Dendritic cell treated with granulocyte-macrophage colony-stimulating factor and Interleukin-4, amounts not matched to agents 40 ng/mL and 50 ng/mL, for 4 days (primary cell): ENCODE measurements at regions of chr4 and their contacts with region 1.

Region 1: GRCh38 chr4:81197864-81198524 is 17.0 kb downstream of the PRKG2 start:
- H3K4me3 Mint-ChIP-seq: no peak overlapping the region
- H3K27ac Mint-ChIP-seq: no peak overlapping the region
- H3K4me1 Mint-ChIP-seq: no peaks in the 10 kb centered on the region
- H3K27me3 Mint-ChIP-seq: no peaks in the 10 kb centered on the region

Region 2: GRCh38 chr4:81227968-81228367 is 30.0 kb after region 1 on chr4:
- intact Hi-C with region 1: loop called (anchors 1 kb)
- H3K4me3 Mint-ChIP-seq: no peak overlapping the region
- H3K27ac Mint-ChIP-seq: no peak overlapping the region
- H3K4me1 Mint-ChIP-seq: no peaks in the 10 kb centered on the region
- H3K27me3 Mint-ChIP-seq: no peaks in the 10 kb centered on the region